Activated B cell treated with CpG ODN at 0.5 μM for 24 hours (primary cell): ENCODE measurements at regions of chr3 and their contacts with region 1.

Region 1: GRCh38 chr3:50587806-50588758 is 18.8 kb downstream of the HEMK1 start:
- DNase-seq: no peak
- ATAC-seq: peak; percentile 6
- H3K4me3 Mint-ChIP-seq: no peak overlapping the region
- H3K27ac Mint-ChIP-seq: peak overlapping the region; percentile 63
- H3K4me1 Mint-ChIP-seq: peaks cover 34% of the 10 kb centered on the region
- H3K27me3 Mint-ChIP-seq: no peaks in the 10 kb centered on the region
- CTCF ChIP-seq: no peak

Region 2: DNA sequence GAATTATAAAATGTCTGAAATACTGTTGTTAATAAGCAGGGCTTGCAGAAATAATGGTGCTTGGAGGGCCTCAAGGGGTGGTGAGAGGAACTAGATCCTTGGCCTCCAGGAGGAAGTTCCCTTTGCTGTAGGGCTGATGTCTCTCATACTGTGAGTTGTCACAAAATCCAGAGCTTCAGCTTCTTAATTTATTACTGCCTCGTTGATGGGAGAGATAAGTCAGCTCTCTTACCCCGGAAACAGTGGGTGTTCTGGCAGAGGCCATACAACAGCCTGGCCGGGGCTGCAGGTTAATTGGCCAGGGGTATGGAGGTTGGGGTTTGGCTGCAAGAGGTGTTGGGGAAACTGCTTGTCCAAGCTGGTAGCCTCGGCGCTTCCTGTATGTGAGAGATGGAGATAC is 44.4 kb after region 1 on chr3:
- CTCF ChIA-PET with region 1: interaction called, 3 read pairs
- POLR2A ChIA-PET with region 1: interaction called, 13 read pairs
- intact Hi-C with region 1: no loop called
- DNase-seq: no peak
- ATAC-seq: no peak
- H3K4me3 Mint-ChIP-seq: no peak overlapping the region
- H3K27ac Mint-ChIP-seq: no peak overlapping the region
- H3K4me1 Mint-ChIP-seq: peaks cover 31% of the 10 kb centered on the region
- H3K27me3 Mint-ChIP-seq: no peaks in the 10 kb centered on the region
- CTCF ChIP-seq: no peak